Gastrocnemius medialis (tissue), 4 donors: ENCODE measurements at regions of chr13 and their contacts with region 1.

Region 1: DNA sequence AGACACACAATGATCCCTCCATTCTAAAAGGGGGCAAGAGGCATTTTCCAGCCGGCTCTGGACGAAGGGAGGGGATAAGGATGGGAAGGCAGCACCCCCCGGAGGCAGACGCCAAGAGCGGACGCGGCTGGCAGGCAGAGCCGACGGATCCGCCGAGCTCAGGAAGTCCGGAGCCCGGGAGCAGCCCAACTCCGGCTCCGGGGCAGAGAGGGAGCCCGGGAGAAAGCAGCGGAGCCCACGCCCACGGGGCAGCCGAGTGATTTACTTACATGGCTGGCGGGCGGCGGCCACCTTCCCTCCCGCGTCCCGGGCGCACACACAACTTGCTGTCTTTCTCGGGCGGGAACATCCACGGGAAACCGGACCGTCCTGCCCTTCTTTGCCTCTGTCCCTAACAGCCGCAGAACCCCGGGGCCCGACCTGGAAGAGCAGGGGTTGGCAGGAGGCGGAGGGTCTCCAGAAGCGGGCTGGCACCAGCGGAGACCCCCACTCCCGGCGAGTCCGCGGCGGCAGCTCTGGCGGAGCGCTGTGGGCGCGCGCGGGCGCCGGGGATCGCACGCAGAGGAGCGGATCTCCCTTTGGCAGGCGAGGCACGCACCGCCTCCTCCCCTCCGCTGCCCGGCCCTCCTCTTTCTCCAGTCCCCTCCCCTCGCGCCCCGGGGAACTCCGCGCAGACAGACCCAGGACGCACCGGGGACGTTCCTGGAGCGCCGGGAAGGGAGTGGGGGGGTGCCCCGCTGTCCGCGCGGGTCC is at the start of gene LHFPL6:
- DNase-seq: peak; percentile 56 to 57
- ATAC-seq: peak; percentile 85 to 88
- H3K4me3 ChIP-seq: peak within 1 kb of the TSS; percentile 61 to 83 (median 73)
- H3K27ac ChIP-seq: peak within 1 kb of the TSS; percentile 54 to 82 (median 80)
- H3K4me1 ChIP-seq: peaks cover 6 to 10% of the 10 kb centered on the region in 2 donors
- H3K27me3 ChIP-seq: peaks cover 0 to 4% (median 0%) of the 10 kb centered on the region in 3 donors
- CTCF ChIP-seq: peak in 2 of 5 experiments; percentile 20 to 22
- POLR2A ChIP-seq: peak; percentile 42 to 74
- total RNA-seq, gene LHFPL6: 12.7 to 26.3 (median 16.0) TPM

Region 2: DNA sequence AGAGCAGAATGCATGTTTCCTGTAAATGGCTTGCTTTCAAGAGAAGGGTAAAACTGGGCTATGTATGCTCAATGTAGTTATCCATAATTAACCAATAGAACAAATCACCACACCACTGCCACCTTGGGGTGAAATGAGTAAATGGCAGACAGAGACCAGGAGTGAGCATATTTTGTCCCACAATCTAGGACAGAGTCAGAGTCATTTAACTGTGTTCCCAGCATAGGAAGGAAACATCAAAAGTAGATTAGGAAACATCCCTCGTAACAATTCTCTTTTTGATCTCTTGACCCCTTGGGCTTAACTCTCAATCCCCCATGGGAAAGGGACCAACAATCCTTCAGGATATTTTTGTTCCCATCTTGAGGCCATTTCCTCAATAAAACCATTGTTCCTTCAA is 339.8 kb before region 1 on chr13:
- in situ Hi-C with region 1: loop called in 1 of 4 experiments (anchors 25 kb)
- intact Hi-C with region 1: no loop called
- DNase-seq: no peak
- ATAC-seq: peak; percentile 68 to 76
- H3K4me3 ChIP-seq: no peak overlapping the region
- H3K27ac ChIP-seq: peak overlapping the region in 1 of 4 donors; percentile 13
- H3K4me1 ChIP-seq: peaks cover 14 to 31% of the 10 kb centered on the region in 2 donors
- H3K27me3 ChIP-seq: no peaks in the 10 kb centered on the region
- CTCF ChIP-seq: peak; percentile 32 to 58 (median 42)
- POLR2A ChIP-seq: no peak

Region 3: DNA sequence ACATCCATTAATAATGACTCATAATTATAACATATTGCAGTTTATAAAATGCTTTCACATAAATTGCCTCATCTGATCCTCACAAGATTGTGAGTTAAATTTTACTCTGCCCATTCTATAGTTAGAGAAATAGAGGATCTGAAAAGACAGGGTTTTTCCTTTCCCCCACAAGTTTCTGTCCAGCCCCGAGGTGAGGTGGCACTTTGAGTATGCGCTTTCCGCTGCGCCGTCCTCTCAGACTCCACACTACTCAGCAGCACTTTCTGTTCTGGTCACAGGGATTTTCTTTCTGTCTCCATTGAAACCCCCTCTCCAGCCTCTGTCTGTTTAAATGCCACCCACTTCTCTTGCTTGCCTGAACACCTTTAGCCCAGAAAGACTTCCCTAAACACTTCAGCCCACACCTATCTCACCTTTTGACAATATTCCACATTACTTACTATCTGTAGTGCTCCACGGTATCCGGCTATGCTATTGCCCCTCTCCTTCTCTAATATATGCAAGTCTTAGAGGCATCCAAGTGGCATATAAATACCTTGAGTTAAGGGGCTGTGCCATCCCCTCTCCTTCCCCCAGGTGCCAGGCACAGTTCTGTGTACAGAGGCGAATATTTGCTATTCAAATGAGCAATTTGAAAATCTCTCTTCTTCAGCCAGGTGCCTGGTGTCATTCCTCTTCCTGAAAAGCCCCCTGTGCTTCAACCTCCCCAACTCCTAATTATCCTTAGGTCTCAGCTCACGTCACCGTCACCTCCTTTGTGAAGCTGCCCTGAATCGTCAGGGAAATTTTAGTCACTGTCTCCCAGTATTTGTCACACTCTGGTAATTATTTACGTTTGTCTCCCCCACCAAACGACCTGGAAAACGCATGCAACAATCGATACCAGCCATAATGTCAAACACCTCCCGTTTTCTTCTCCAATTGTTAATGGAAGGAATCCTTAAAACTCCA is 295.9 kb before region 1 on chr13:
- in situ Hi-C with region 1: no loop called
- intact Hi-C with region 1: no loop called
- DNase-seq: no peak
- ATAC-seq: no peak
- H3K4me3 ChIP-seq: no peak overlapping the region
- H3K27ac ChIP-seq: no peak overlapping the region
- H3K4me1 ChIP-seq: no peaks in the 10 kb centered on the region
- H3K27me3 ChIP-seq: no peaks in the 10 kb centered on the region
- CTCF ChIP-seq: no peak
- POLR2A ChIP-seq: no peak

Region 4: DNA sequence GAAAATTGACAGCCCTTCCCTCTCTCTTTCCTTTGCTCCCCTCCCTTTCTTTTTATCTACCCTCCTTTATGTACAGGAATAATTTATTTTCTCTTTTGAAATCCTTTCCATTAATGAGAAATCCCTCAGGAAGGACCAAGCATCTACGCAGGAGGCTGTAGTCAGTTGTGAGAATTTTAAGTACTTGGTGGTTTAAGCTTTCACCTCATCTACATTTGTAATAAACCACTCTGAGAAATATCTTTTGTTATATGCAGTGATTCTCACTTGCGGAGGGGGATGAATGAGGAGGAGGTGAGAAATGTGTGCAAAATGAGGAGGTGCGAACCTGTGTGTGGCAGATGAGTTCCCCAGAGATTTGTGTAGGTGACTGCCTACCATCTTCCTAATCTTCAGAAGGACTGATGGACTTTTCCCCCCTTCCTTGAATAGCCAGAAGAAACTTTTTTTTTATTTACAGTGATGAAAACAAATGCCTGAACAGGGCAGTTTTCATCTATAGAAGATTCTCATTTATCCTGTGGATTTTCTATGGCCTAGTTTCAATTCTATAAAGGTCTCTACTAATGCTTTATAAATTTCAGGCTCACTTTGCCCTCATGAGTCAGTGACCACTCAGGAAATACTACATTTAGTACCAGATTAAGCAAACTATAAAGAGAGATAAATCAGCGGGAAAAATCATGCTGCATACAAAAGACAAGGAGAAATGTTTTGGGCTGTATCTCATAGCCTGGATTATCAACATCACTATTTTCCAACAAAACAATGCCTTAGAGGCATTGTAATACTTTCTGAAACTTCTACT is 118.1 kb before region 1 on chr13:
- in situ Hi-C with region 1: no loop called
- intact Hi-C with region 1: no loop called
- DNase-seq: no peak
- ATAC-seq: no peak
- H3K4me3 ChIP-seq: no peak overlapping the region
- H3K27ac ChIP-seq: no peak overlapping the region
- H3K4me1 ChIP-seq: peaks cover 0 to 12% of the 10 kb centered on the region in 2 donors
- H3K27me3 ChIP-seq: no peaks in the 10 kb centered on the region
- CTCF ChIP-seq: no peak
- POLR2A ChIP-seq: no peak